GM12878 (cell line): ENCODE measurements at regions of chr7 and their contacts with region 1.

Region 1: GRCh38 chr7:134750083-134751062 is 29.1 kb upstream of the CALD1 start:
- DNase-seq: no peak
- ATAC-seq: peak; percentile 94
- H3K4me3 ChIP-seq: no peak overlapping the region
- H3K27ac ChIP-seq: no peak overlapping the region
- H3K4me1 ChIP-seq: no peaks in the 10 kb centered on the region
- H3K27me3 ChIP-seq: 0 out of 4 replicates have a peak, but pooled peaks cover 0 to 2% of the 10 kb centered on the region in 2 experiments
- CTCF ChIP-seq: peak; percentile 62 to 97 (median 86)
- EP300 ChIP-seq: no peak
- POLR2A ChIP-seq: no peak
- RAD21 ChIP-seq: peak; percentile 68

Region 2: GRCh38 chr7:134710859-134711624 is 39.3 kb before region 1 on chr7:
- CTCF ChIA-PET with region 1: interaction called, 6 read pairs
- POLR2A ChIA-PET with region 1: no interaction called
- RAD21 ChIA-PET with region 1: no interaction called
- SMC1A ChIA-PET with region 1: no interaction called
- in situ Hi-C with region 1: no loop called
- intact Hi-C with region 1: loop called (anchors 5 kb)
- DNase-seq: no peak
- ATAC-seq: no peak
- H3K4me3 ChIP-seq: no peak overlapping the region
- H3K27ac ChIP-seq: no peak overlapping the region
- H3K4me1 ChIP-seq: no peaks in the 10 kb centered on the region
- H3K27me3 ChIP-seq: peaks cover 1 to 8% of the 10 kb centered on the region in 2 experiments; a peak in 3 of 4 replicates
- CTCF ChIP-seq: no peak
- EP300 ChIP-seq: no peak
- POLR2A ChIP-seq: no peak
- RAD21 ChIP-seq: no peak

Region 3: GRCh38 chr7:134724606-134725005 is 25.8 kb before region 1 on chr7:
- CTCF ChIA-PET with region 1: interaction called, 20 read pairs
- POLR2A ChIA-PET with region 1: no interaction called
- RAD21 ChIA-PET with region 1: interaction called, 3 read pairs
- SMC1A ChIA-PET with region 1: interaction called, 5 read pairs
- in situ Hi-C with region 1: no loop called
- intact Hi-C with region 1: no loop called
- DNase-seq: peak; percentile 11
- ATAC-seq: peak; percentile 85
- H3K4me3 ChIP-seq: no peak overlapping the region
- H3K27ac ChIP-seq: no peak overlapping the region
- H3K4me1 ChIP-seq: no peaks in the 10 kb centered on the region
- H3K27me3 ChIP-seq: no peaks in the 10 kb centered on the region; a peak in 1 of 4 replicates
- CTCF ChIP-seq: peak; percentile 48 to 59 (median 52); a peak in 5 of 6 replicates
- EP300 ChIP-seq: no peak
- POLR2A ChIP-seq: no peak
- RAD21 ChIP-seq: peak; percentile 52

Region 4: DNA sequence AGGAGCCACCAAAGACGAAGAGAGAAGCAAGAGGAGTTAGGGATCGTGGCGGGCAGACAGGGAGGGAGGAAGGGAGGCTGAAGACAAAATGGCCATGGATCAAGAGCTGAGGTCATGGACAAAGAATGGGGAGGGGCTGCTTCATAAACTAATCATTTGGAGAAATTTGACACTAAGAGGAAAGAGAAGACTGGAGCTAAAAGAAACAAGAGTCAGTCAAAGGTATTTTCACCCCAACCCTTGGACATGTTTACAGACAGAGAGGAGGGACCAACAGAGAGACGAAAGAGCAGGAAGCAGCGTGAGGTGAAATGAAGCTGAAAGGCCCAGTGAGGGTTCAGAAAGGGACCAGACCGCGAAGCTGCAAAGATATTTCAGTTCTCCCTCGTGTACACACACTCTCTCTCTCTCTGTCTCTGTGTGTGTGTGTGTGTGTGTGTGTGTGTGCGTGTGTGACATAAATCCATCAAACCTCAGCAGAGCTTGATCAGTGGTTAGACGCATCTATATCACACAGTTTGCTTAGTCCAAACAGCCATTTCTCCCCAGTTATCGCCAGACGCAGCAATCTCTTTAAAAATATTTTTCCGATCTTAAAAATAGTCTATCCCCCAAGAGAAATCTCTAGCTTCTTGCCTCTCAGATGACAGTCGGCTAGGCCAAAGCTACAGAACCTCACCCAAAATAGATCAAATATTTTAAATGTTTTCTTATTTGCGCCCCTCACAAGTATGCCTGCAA is 16.6 kb after region 1 on chr7:
- CTCF ChIA-PET with region 1: interaction called, 23 read pairs
- POLR2A ChIA-PET with region 1: no interaction called
- RAD21 ChIA-PET with region 1: no interaction called
- SMC1A ChIA-PET with region 1: interaction called, 5 read pairs
- in situ Hi-C with region 1: no loop called
- intact Hi-C with region 1: no loop called
- DNase-seq: peak; percentile 40
- ATAC-seq: peak; percentile 85
- H3K4me3 ChIP-seq: no peak overlapping the region
- H3K27ac ChIP-seq: no peak overlapping the region
- H3K4me1 ChIP-seq: peaks cover 8% of the 10 kb centered on the region
- H3K27me3 ChIP-seq: no peaks in the 10 kb centered on the region
- CTCF ChIP-seq: no peak
- EP300 ChIP-seq: no peak
- POLR2A ChIP-seq: no peak
- RAD21 ChIP-seq: no peak

Region 5: GRCh38 chr7:136326045-136326609 is 1575.8 kb after region 1 on chr7:
- CTCF ChIA-PET with region 1: no interaction called
- POLR2A ChIA-PET with region 1: no interaction called
- RAD21 ChIA-PET with region 1: no interaction called
- SMC1A ChIA-PET with region 1: no interaction called
- in situ Hi-C with region 1: no loop called
- intact Hi-C with region 1: no loop called
- DNase-seq: no peak
- ATAC-seq: no peak
- H3K4me3 ChIP-seq: no peak overlapping the region
- H3K27ac ChIP-seq: no peak overlapping the region
- H3K4me1 ChIP-seq: no peaks in the 10 kb centered on the region
- H3K27me3 ChIP-seq: no peaks in the 10 kb centered on the region
- CTCF ChIP-seq: no peak
- EP300 ChIP-seq: no peak
- POLR2A ChIP-seq: no peak
- RAD21 ChIP-seq: no peak